ENCODE measurements at regions of chr1 and their contacts with region 1.

Region 1: DNA sequence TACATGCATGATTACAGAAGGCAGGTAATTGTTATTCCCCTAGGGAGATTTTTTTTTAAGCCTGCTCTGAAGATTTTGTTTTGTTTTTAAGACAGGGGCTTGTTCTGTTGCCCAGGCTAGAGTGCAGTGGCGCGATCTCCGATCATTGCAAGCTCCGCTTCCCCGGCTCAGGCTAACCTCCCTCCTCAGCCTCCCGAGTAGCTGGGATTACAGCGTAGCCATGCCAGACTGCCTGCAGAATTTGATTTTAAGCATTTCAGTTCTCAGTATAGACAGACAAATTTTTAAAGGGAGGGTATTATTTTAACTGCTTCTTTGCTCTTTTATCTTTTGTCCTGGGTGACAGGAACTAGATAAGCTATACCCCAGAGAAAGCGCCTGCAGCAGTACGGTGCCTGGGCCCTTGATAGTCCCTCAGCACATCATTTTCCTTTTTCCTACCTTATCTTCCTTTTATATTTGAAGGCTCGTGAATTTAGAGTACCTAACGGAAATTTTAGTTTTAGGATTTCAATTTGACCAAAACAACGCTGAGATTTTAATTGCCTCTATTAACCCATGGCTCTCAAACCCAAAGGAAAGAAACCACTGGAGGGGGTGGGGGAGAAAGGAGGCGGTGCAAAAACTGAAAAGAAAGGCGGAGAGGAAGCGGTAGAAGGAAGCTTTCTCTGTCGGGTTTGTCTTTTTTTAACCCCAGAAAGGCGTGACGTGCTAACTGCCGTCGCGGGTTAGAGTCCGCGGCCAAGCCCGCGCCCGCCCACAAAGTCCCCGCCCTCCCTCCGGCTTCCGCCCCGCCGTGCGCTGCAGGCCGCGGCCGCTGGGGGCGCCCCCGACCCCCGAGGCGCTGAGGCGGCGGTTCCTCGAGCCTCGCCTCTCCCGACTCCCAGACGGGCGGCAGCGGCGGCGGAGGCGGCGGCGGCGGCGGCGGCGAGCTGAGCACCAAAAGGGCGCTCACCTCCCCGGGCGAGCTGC is at the start of gene EEIG2:
- DNase-seq: peak; percentile 87
- ATAC-seq: peak; percentile 94 to 96
- total RNA-seq, gene EEIG2: 8.5 to 9.9 TPM

Region 2: GRCh38 chr1:108595507-108595906 is 36.0 kb after region 1 on chr1:
- intact Hi-C with region 1: loop called in 1 of 2 experiments (anchors 5 kb)
- DNase-seq: no peak
- ATAC-seq: peak; percentile 21 to 48

Region 3: GRCh38 chr1:108627256-108627655 is 67.8 kb after region 1 on chr1:
- intact Hi-C with region 1: loop called in 1 of 2 experiments (anchors 5 kb)
- DNase-seq: no peak
- ATAC-seq: no peak

Region 4: GRCh38 chr1:108643492-108644335 is 84.2 kb after region 1 on chr1:
- intact Hi-C with region 1: loop called in 1 of 2 experiments (anchors 5 kb)
- DNase-seq: peak; percentile 41
- ATAC-seq: peak; percentile 64 to 67